ENCODE measurements at regions of chr12 and their contacts with region 1.

Region 1: GRCh38 chr12:91178139-91178561 is 4.5 kb downstream of the DCN start:
- DNase-seq: peak in 1 of 2 donors; percentile 4
- H3K4me3 ChIP-seq: no peak overlapping the region
- H3K27ac ChIP-seq: peak overlapping the region in 2 of 3 donors; percentile 30 to 46
- H3K4me1 ChIP-seq: no peaks in the 10 kb centered on the region
- H3K27me3 ChIP-seq: no peaks in the 10 kb centered on the region
- CTCF ChIP-seq: peak in 5 of 6 experiments; percentile 12 to 88 (median 65)
- POLR2A ChIP-seq: no peak

Region 2: GRCh38 chr12:90757957-90758356 is 420.2 kb before region 1 on chr12:
- intact Hi-C with region 1: no loop called
- DNase-seq: no peak
- H3K4me3 ChIP-seq: no peak overlapping the region
- H3K27ac ChIP-seq: no peak overlapping the region
- H3K4me1 ChIP-seq: no peaks in the 10 kb centered on the region
- H3K27me3 ChIP-seq: no peaks in the 10 kb centered on the region
- CTCF ChIP-seq: no peak
- POLR2A ChIP-seq: no peak

Region 3: DNA sequence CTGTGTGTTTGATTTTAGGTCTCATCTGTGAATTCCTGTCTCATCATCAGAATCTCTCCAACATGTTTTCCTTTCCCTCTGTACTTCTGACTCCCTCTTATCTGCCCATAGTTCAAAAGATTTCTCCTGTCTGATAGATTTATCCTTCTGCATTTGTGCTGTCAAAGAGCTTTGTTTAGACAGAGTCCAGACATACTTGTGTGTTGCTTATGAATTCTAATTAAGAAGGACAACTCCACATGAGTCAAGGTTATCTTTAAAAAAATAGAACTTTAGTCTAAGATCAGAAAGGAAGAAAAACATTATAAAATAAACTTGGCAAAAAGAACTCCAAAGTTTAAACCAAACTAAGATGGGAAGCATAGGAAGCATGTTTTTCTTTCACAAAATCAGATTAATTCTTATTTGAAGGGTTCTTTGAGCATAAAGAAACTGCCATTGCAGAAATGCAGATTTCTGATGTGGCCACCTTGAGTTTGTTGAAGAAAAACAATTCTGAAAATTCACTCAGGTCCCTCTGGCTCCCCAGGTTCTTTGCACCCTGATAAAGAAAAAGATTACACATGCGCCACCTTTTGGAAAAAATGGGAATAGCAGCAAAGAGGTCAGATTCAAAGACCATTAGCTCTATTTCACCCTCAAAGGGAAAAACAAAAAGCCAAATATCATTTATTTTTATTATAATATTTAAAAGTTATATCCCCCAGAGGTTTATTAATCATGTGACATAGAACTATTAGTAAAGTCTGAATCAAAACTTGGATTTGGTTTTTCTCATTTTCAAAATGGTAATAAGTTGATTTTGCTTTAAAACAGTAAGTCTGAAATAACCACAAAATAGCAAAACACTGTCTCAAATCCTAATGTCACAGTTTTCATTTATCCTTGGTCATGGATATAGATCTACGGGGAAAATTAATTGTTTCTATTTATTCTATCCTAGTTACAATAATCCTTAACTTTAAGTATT is 148.2 kb after region 1 on chr12:
- intact Hi-C with region 1: loop called (anchors 5 kb)
- DNase-seq: peak; percentile 36 to 44
- H3K4me3 ChIP-seq: no peak overlapping the region
- H3K27ac ChIP-seq: peak overlapping the region; percentile 22 to 28 (median 23)
- H3K4me1 ChIP-seq: peaks cover 0 to 2% of the 10 kb centered on the region in 2 donors
- H3K27me3 ChIP-seq: no peaks in the 10 kb centered on the region
- CTCF ChIP-seq: peak; percentile 56 to 87 (median 80)
- POLR2A ChIP-seq: no peak

Region 4: DNA sequence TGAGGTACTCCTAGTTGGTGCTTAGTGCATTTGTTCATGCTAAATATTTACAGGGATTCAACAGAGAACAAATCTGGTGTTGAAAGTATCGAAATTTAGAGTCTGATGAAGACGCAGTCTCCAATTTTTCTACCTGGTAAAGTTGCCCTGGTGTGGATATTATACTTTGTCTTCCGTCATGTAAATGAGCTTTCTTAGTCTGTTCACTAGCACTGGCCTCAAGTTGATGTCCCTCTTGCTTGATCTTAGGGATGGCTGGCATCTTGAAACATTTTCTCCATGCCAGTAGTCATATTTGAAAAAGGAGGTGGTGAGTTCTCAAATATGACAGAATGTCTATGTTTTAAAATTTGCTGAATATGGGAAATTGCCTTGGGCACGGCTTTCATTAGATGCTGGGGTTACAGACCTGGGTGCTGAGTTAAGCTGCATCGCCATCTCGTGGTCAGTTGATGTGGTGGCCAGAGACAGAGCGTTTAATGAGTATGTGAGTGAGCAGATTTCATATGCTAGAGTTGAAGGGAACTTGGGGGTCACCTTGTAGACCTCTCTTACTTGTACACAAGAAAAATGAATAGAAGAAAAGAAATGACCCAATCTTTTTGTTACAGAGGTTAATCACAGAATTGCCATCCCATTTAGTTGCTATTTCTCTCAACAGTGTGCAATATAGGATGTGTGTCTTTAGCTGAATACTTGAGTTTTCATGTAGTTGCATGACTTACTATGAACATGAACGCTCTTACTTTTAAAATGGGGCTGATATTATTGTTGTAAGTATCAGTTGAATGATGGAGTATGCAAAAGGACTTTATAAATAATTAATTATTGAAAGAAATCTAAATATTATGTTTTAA is 177.2 kb after region 1 on chr12:
- intact Hi-C with region 1: loop called (anchors 10 kb)
- DNase-seq: peak; percentile 71 to 74
- H3K4me3 ChIP-seq: no peak overlapping the region
- H3K27ac ChIP-seq: no peak overlapping the region
- H3K4me1 ChIP-seq: no peaks in the 10 kb centered on the region
- H3K27me3 ChIP-seq: no peaks in the 10 kb centered on the region
- CTCF ChIP-seq: peak; percentile 54 to 90 (median 78)
- POLR2A ChIP-seq: no peak